Activated naive CD4-positive, alpha-beta T cell treated with anti-CD3 and anti-CD28 coated beads for 36 hours (primary cell): ENCODE measurements at regions of chrX and their contacts with region 1.

Region 1: GRCh38 chrX:137565921-137566745 is at the start of gene ZIC3:
- DNase-seq: peak; percentile 31
- H3K4me3 Mint-ChIP-seq: peak within 1 kb of the TSS; percentile 52
- H3K27ac Mint-ChIP-seq: peak within 1 kb of the TSS; percentile 13
- H3K4me1 Mint-ChIP-seq: peaks cover 13% of the 10 kb centered on the region
- H3K27me3 Mint-ChIP-seq: peaks cover 49% of the 10 kb centered on the region
- total RNA-seq, gene ZIC3: not detected

Region 2: GRCh38 chrX:136086521-136086920 is 1479.6 kb before region 1 on chrX:
- CTCF ChIA-PET with region 1: no interaction called
- intact Hi-C with region 1: no loop called
- DNase-seq: no peak
- H3K4me3 Mint-ChIP-seq: no peak overlapping the region
- H3K27ac Mint-ChIP-seq: no peak overlapping the region
- H3K4me1 Mint-ChIP-seq: no peaks in the 10 kb centered on the region
- H3K27me3 Mint-ChIP-seq: no peaks in the 10 kb centered on the region

Region 3: DNA sequence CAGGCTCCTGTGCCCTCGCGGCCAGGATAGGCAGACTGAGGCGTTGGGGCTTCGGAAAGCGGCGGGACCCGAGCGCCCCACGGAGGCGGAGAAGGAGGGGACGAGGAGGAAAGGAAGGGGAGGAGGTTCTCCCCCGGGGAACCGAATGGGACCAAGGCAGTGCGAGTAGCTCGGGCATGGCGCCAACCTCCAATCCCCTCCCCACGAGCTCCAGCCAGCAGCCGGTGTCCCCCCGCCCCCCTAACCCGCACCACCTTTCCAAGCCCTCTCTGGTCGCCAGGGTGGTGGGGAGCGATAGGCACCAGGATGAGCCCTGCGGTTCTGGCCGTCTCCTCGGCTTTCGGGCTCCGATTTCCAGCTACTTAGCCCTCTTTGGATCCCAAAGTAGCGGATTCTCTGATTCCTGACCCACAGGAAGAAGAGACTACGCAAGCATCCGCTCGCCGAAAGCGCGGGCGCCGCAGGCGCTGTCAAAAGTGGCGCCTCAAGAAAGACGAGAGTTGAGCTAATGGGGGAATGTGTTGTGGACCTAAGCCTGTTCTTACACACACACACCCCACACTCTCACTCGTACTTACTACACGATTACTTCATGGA is 15.4 kb before region 1 on chrX:
- CTCF ChIA-PET with region 1: no interaction called
- intact Hi-C with region 1: loop called (anchors 1 kb)
- DNase-seq: no peak
- H3K4me3 Mint-ChIP-seq: peak overlapping the region; percentile 27
- H3K27ac Mint-ChIP-seq: no peak overlapping the region
- H3K4me1 Mint-ChIP-seq: peaks cover 11% of the 10 kb centered on the region
- H3K27me3 Mint-ChIP-seq: peaks cover 34% of the 10 kb centered on the region

Region 4: GRCh38 chrX:137747244-137748043 is 181.3 kb after region 1 on chrX:
- CTCF ChIA-PET with region 1: no interaction called
- intact Hi-C with region 1: no loop called
- DNase-seq: no peak
- H3K4me3 Mint-ChIP-seq: no peak overlapping the region
- H3K27ac Mint-ChIP-seq: no peak overlapping the region
- H3K4me1 Mint-ChIP-seq: no peaks in the 10 kb centered on the region
- H3K27me3 Mint-ChIP-seq: no peaks in the 10 kb centered on the region